Activated CD4-positive, alpha-beta T cell treated with anti-CD3 and anti-CD28 coated beads for 36 hours (primary cell): ENCODE measurements at regions of chr14 and their contacts with region 1.

Region 1: GRCh38 chr14:90053044-90053443 is 8.8 kb upstream of the KCNK13 start:
- DNase-seq: no peak
- ATAC-seq: no peak
- H3K4me3 Mint-ChIP-seq: no peak overlapping the region
- H3K27ac Mint-ChIP-seq: no peak overlapping the region
- H3K4me1 Mint-ChIP-seq: no peaks in the 10 kb centered on the region
- H3K27me3 Mint-ChIP-seq: peaks cover 46% of the 10 kb centered on the region

Region 2: GRCh38 chr14:90159146-90159545 is 106.1 kb after region 1 on chr14:
- CTCF ChIA-PET with region 1: no interaction called
- POLR2A ChIA-PET with region 1: no interaction called
- intact Hi-C with region 1: loop called in 1 of 2 experiments (anchors 5 kb)
- DNase-seq: no peak
- ATAC-seq: no peak
- H3K4me3 Mint-ChIP-seq: no peak overlapping the region
- H3K27ac Mint-ChIP-seq: no peak overlapping the region
- H3K4me1 Mint-ChIP-seq: no peaks in the 10 kb centered on the region
- H3K27me3 Mint-ChIP-seq: peaks cover 21% of the 10 kb centered on the region